ENCODE measurements at regions of chrX and their contacts with region 1.

Region 1: DNA sequence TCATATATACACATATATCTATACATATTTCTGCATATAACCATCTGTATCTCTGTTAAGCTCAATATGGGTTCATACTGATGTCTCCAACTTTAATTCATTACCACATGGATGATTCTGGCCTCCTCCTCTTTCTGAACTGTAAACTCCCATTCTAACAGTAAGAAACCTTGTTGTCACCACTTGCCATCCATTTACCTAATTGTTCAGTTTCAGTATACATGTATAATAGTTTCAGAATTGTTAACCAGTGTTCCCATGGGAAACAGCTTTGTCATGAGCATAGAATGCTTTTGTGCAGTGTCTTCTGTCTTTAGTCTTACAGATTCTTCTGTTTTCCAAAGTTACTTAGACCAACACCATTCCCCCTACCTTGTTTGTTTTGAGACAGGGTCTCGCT is 35.9 kb downstream of the SLC9A6 start:
- DNase-seq: no peak
- ATAC-seq: no peak
- H3K4me3 ChIP-seq: no peak overlapping the region
- H3K27ac ChIP-seq: no peak overlapping the region
- H3K4me1 ChIP-seq: no peaks in the 10 kb centered on the region
- H3K27me3 ChIP-seq: no peaks in the 10 kb centered on the region

Region 2: GRCh38 chrX:135625995-135626394 is 395.2 kb before region 1 on chrX:
- intact Hi-C with region 1: no loop called
- DNase-seq: no peak
- ATAC-seq: no peak
- H3K4me3 ChIP-seq: no peak overlapping the region
- H3K27ac ChIP-seq: no peak overlapping the region
- H3K4me1 ChIP-seq: no peaks in the 10 kb centered on the region
- H3K27me3 ChIP-seq: no peaks in the 10 kb centered on the region

Region 3: GRCh38 chrX:136106920-136107528 is 85.9 kb after region 1 on chrX:
- intact Hi-C with region 1: no loop called
- DNase-seq: no peak
- ATAC-seq: no peak
- H3K4me3 ChIP-seq: no peak overlapping the region
- H3K27ac ChIP-seq: no peak overlapping the region
- H3K4me1 ChIP-seq: no peaks in the 10 kb centered on the region
- H3K27me3 ChIP-seq: no peaks in the 10 kb centered on the region

Region 4: GRCh38 chrX:136577552-136577951 is 556.4 kb after region 1 on chrX:
- intact Hi-C with region 1: loop called (anchors 5 kb)
- DNase-seq: peak; percentile 58 to 78
- ATAC-seq: peak; percentile 85
- H3K4me3 ChIP-seq: no peak overlapping the region
- H3K27ac ChIP-seq: no peak overlapping the region
- H3K4me1 ChIP-seq: no peaks in the 10 kb centered on the region
- H3K27me3 ChIP-seq: no peaks in the 10 kb centered on the region